Ascending aorta (tissue), 2 donors: ENCODE measurements at regions of chr7 and their contacts with region 1.

Region 1: DNA sequence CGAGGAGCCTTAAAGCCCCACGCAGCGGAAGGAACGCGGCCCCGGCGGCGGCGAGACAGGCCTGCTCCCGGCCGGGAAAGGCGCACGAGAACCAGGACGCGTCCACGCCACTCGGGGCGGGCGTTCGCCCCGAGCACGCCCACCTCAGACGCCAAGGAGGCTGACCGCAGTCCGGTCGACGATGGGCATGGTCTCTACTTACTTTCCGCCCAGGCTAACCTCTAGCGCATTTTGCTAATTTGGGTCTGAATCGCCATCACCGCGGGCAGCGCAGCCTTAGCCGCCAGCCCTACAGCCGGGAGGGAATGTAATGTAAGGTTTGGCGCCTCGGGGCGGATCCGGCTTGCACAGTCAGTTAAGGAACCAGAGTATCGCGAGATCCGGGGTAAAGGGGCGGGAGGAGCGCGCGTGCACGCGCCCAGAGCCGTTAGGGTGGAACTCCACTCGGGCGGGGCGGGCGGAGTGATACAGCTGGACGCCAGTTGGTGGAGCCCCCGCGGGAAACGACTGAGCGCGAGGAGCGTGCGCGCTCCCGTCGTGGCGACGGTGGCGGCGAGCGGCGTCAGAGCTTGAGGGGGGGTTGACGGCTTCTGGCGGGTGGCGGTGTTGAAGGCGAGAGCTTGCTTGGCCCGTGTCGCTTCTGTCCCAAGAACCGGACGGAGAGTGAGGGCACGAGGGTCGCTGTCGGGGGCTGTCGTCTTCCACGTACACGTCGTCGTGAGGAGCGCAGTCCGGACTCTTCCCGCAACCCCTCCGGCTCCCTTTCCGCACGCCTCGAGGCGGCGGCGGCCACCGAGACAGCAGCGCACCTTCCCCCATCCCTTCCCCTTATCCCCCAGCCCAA is at the start of gene LUC7L2:
- DNase-seq: peak; percentile 98 to 100
- H3K4me3 ChIP-seq: peak within 1 kb of the TSS; percentile 86 to 96
- H3K27ac ChIP-seq: peak within 1 kb of the TSS; percentile 100
- H3K4me1 ChIP-seq: peaks cover 0 to 26% of the 10 kb centered on the region in 2 donors
- H3K27me3 ChIP-seq: no peaks in the 10 kb centered on the region
- CTCF ChIP-seq: peak in 1 of 3 experiments; percentile 12
- total RNA-seq, gene LUC7L2: 41.0 TPM

Region 2: GRCh38 chr7:139109188-139109982 is 250.2 kb before region 1 on chr7 and contains the start of gene ZC3HAV1:
- intact Hi-C with region 1: loop called (anchors 10 kb)
- DNase-seq: peak; percentile 60 to 92
- H3K4me3 ChIP-seq: peak within 1 kb of the TSS; percentile 98 to 100
- H3K27ac ChIP-seq: peak within 1 kb of the TSS; percentile 97 to 98
- H3K4me1 ChIP-seq: peaks cover 0 to 4% of the 10 kb centered on the region in 2 donors
- H3K27me3 ChIP-seq: no peaks in the 10 kb centered on the region
- CTCF ChIP-seq: no peak
- total RNA-seq, gene ZC3HAV1: 25.0 TPM

Region 3: DNA sequence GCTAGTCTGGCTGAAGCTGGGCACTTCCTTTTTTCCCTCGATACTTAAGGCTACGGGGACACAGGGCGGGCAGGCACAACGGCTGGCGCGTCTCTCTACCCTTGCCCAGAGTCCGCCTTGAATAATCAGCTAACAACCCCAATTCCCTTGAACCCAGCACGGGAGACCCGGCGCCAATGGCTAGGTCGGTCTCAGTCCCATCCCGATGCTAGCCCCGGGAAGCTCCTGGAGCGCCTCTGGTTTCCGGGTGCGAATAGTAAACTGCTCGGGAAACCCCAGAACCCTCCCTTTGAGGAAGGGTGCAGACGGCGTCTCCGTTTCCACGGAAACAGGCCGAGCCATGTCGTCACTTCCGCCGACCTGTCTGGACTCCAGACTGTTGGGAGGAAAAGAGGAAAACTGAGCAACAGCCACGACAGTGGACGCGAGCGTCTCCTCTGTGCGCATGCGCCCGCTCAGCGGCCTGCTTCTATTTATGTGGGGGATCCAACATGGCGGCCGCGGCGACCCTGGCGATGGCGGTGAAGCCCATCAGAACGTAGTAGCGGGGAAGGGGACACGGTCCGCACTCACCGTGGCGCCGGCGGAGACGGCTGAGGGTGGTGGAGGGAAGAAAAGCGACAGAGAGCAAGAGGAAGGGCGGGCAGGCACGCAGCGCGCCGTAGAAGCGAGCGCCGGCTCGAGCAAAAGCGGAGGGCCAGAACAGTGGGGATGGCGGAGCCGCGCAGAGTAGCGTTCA is 128.6 kb before region 1 on chr7 and contains the start of gene UBN2:
- intact Hi-C with region 1: loop called (anchors 1 kb)
- DNase-seq: peak; percentile 86 to 98
- H3K4me3 ChIP-seq: peak within 1 kb of the TSS; percentile 88 to 96
- H3K27ac ChIP-seq: peak within 1 kb of the TSS; percentile 95 to 96
- H3K4me1 ChIP-seq: peaks cover 3 to 13% of the 10 kb centered on the region in 2 donors
- H3K27me3 ChIP-seq: no peaks in the 10 kb centered on the region
- CTCF ChIP-seq: no peak
- total RNA-seq, gene UBN2: 3.7 TPM

Region 4: DNA sequence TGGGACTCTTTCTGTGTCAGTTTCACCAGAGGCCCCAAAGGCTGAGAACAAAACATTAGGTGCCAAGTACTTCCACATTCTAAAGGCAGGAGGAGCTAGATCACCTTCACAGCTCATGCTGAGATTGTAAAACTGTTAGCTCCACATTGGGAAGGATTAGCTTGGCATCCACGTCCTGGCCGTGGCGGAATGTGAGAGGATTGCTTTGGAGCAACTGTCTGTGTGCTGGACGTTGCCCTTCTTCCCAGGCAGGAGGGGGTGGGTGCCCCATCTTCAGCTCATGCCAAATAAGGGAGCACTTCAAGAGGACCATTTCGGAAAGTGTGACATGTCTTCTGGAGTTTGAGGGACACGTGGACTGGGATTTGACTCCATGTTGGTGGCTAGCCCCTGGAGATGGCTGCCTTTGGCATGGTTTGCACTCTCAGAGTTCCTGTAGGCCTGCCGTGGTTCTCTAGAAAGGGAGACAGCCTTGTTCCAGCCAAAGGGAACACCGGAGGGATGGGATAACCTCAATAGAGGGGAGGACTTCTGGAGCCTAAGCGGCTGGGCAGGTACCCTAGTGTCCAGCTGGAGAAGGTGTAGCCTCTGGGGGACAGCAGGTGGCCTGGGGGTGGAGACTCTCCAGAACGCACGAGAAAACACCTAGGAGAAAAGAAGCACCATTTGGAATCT is 38.4 kb before region 1 on chr7:
- intact Hi-C with region 1: no loop called
- DNase-seq: no peak
- H3K4me3 ChIP-seq: no peak overlapping the region
- H3K27ac ChIP-seq: no peak overlapping the region
- H3K4me1 ChIP-seq: no peaks in the 10 kb centered on the region
- H3K27me3 ChIP-seq: no peaks in the 10 kb centered on the region
- CTCF ChIP-seq: no peak

Region 5: DNA sequence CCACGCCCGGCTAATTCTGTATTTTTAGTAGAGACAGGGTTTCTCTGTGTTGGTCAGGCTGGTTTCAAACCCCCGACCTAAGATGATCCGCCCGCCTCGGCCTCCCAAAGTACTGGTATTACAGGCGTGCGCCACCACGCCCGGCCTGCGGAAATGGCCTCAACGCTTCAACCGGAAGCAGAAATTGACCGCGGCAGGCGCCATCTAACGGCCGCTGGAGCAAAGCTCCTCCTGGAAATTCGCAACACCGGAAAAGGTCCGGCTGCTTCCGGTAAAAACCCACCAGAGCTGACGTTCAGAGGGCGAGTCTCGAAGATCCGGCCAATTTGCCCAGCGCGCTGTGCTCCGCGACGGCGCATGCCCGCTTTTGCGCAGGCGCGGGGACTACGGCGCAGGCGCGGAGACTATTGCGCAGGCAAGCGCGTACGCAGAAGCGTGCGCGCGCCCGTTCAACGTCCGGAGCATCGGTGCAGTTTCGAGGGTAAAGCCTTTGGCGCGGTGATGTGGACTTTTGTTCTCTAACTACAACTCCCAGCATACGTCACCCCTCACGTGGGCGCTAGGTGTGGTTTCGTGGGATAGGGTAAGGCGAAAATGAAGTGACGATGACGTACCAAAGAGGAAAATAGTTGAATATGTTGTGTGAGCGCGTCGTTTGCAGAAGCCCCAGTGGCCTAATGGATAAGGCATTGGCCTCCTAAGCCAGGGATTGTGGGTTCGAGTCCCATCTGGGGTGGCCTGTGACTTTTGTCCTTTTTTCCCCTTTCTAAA is 19.4 kb before region 1 on chr7:
- intact Hi-C with region 1: loop called (anchors 1 kb)
- DNase-seq: peak; percentile 100
- H3K4me3 ChIP-seq: peak overlapping the region; percentile 77 to 87
- H3K27ac ChIP-seq: peak overlapping the region; percentile 99 to 100
- H3K4me1 ChIP-seq: peaks cover 0 to 6% of the 10 kb centered on the region in 2 donors
- H3K27me3 ChIP-seq: no peaks in the 10 kb centered on the region
- CTCF ChIP-seq: peak; percentile 69 to 77 (median 72)

Region 6: GRCh38 chr7:139431010-139431409 is 71.4 kb after region 1 on chr7:
- intact Hi-C with region 1: loop called (anchors 2 kb)
- DNase-seq: no peak
- H3K4me3 ChIP-seq: no peak overlapping the region
- H3K27ac ChIP-seq: peak overlapping the region; percentile 93 to 94
- H3K4me1 ChIP-seq: peaks cover 16 to 39% of the 10 kb centered on the region in 2 donors
- H3K27me3 ChIP-seq: no peaks in the 10 kb centered on the region
- CTCF ChIP-seq: no peak

Region 7: DNA sequence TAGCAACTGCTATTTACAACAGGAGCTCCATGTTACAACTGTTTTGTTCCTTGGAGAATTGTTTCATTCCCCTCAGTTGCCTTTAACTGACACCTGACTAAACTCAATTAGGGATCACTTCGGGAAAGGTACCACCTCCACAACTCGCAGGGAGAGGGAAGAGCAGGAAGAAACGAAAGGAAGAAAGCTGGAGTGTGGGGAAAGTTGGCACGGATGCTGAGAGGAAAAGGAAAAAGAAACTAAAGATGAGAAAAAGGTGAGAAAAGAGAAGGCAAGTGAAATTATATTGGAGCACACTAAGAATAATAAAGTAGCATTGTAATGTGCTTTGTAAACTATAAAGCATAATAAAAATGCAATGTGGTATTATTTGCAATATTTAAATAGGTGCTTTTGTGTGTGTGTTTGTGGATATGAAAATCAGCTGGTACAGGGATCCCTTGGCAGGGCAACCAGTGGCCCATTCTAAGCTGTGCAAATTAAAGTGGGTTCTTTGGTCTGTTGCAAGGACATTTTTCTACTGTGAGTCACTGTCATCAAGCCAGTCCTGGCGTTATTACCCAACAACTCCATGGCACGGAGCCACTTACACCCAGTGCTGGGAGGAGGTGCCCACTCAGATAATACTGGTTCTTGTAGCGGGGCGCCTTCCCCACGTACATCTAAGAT is 372.3 kb after region 1 on chr7:
- intact Hi-C with region 1: loop called (anchors 5 kb)
- DNase-seq: peak; percentile 76 to 98
- H3K4me3 ChIP-seq: peak overlapping the region; percentile 24 to 37
- H3K27ac ChIP-seq: peak overlapping the region; percentile 96
- H3K4me1 ChIP-seq: peaks cover 35 to 71% of the 10 kb centered on the region in 2 donors
- H3K27me3 ChIP-seq: no peaks in the 10 kb centered on the region
- CTCF ChIP-seq: no peak